ENCODE measurements at regions of chr11 and their contacts with region 1.

Region 1: GRCh38 chr11:62671575-62672389 is at the starts of genes LBHD1 and UQCC3:
- DNase-seq: peak; percentile 76 to 85 (median 83)
- ATAC-seq: peak; percentile 75 to 87 (median 82)
- H3K4me3 ChIP-seq: peak within 1 kb of the TSS; percentile 80 to 97 (median 95)
- H3K27ac ChIP-seq: peak within 1 kb of the TSS; percentile 80 to 90 (median 87)
- H3K4me1 ChIP-seq: peaks cover 0 to 49% (median 16%) of the 10 kb centered on the region in 4 donors
- H3K27me3 ChIP-seq: no peaks in the 10 kb centered on the region
- CTCF ChIP-seq: no peak
- POLR2A ChIP-seq: peak; percentile 67
- total RNA-seq, gene LBHD1: 2.7 to 6.5 (median 3.7) TPM
- total RNA-seq, gene UQCC3: 4.0 to 6.3 (median 5.3) TPM

Region 2: DNA sequence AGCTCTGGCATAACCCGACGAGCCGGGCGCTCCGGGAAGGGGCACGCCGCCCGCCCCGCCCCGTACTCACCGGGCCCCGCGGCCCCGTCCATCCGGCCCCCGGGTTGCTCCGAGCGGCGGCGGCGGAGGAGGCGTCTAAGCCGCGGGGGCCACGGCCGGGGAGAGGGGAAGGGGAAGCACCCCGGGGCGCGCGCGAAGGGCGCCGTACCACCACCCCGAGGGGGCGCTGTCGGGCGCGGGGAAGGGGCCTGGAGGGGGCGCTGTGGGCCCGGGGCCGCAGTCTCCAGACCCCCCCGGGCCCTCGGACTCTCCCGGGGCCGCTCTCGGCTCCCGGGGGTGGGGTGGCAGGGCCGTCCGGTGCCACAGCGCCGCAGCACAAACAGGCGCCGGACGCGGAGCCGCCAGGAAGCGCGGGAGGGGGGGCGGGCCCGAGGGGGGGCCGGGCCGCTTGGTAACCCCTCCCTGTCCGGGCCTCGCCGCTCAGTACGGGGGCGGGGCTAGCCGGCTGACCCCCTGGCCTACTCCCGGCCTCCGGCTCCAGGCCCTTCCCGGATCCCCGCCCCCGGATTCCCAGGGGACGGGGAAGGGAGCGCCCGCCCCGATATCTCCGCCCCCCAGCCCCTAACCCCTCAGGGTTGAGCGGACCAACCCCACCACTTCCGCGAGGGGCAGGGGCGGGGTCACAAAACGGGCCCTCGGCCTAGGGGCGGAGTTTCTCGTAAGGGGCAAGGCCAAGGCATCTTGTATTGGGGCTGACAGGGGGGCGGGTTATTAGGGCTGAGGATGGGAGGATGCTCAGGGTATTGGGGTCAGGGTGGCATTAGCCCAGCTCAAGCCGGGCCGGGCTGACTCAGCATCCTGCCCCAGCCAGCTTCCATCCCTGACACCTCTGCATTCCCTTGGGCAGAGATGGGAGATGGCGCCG is 59.2 kb before region 1 on chr11 and contains the starts of genes EML3 and ROM1:
- intact Hi-C with region 1: loop called in 1 of 2 experiments (anchors 10 kb)
- DNase-seq: peak; percentile 89 to 92 (median 89)
- ATAC-seq: peak; percentile 81 to 89 (median 88)
- H3K4me3 ChIP-seq: peak within 1 kb of the TSS; percentile 67 to 80 (median 78)
- H3K27ac ChIP-seq: peak within 1 kb of the TSS; percentile 75 to 94 (median 90)
- H3K4me1 ChIP-seq: peaks cover 0 to 19% (median 5%) of the 10 kb centered on the region in 4 donors
- H3K27me3 ChIP-seq: no peaks in the 10 kb centered on the region
- CTCF ChIP-seq: peak; percentile 89 to 98 (median 94)
- POLR2A ChIP-seq: peak; percentile 21
- total RNA-seq, gene EML3: 19.1 to 36.4 (median 22.7) TPM
- total RNA-seq, gene ROM1: 1.1 to 2.9 (median 1.2) TPM

Measured in right lobe of liver (tissue), 6 donors.